ENCODE measurements at regions of chr11 and their contacts with region 1.

Region 1: DNA sequence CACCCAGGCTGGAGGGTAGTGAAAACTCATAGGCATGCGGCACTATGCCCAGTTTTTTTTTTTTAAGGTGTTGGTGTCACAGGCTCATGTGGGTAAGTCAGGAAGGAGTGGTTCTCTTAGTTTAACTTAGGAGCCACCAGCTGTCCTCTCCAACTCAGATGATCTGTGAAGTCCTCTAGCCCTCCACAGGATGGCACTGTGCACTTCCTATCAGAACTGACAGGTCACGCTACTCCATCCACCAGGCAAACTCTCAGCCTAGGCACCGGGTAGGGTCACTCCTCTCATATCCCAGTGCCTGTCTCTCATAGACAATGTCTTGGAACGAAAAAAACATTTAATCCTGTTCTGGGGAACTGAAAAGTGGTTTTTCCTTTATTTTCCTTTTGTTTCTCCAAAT is 16.5 kb downstream of the NAP1L4 start:
- DNase-seq: peak; percentile 82
- H3K4me3 Mint-ChIP-seq: no peak overlapping the region
- H3K27ac Mint-ChIP-seq: peak overlapping the region; percentile 74
- H3K4me1 Mint-ChIP-seq: peaks cover 24% of the 10 kb centered on the region
- H3K27me3 Mint-ChIP-seq: no peaks in the 10 kb centered on the region

Region 2: DNA sequence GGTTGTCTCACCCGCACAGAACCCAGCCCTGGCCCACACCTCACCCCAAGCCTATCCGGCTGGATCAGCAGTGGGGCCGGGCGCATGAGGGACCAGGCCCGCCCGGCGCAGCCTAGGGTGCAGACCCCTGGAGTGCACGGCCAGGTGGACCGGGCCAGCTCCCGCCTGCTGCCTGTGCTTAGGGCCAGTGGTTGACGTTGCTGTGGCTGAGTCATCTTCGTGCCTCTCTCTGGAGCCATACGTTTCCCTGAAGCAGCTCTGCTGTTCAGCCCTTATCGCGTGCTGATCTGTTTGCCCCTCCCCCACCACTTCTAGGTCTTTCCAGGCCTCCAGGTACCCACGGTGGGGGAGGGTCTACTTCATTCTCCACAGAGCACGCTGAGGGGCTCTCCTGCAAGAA is 129.5 kb before region 1 on chr11:
- intact Hi-C with region 1: no loop called
- DNase-seq: no peak
- H3K4me3 Mint-ChIP-seq: no peak overlapping the region
- H3K27ac Mint-ChIP-seq: no peak overlapping the region
- H3K4me1 Mint-ChIP-seq: no peaks in the 10 kb centered on the region
- H3K27me3 Mint-ChIP-seq: no peaks in the 10 kb centered on the region

Region 3: DNA sequence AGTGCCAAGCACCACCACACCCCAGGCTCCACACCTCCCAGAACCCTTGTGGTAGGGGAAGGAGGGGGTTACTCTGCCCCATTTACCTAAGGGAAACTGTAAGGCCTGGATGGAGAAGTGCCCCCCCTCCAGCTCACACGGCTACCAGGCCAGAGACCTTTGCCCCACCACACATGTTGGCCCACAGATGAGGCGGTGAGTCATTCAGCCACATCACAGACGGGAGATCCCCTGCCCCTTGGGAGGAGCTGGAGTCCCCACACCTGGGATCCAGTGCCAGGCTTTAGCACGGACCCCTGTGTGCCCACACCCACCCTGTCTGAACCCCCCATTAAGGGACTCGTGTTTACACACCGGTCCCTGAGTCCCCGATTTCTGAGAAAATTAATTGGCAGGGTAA is 115.0 kb before region 1 on chr11:
- intact Hi-C with region 1: no loop called
- DNase-seq: no peak
- H3K4me3 Mint-ChIP-seq: no peak overlapping the region
- H3K27ac Mint-ChIP-seq: no peak overlapping the region
- H3K4me1 Mint-ChIP-seq: no peaks in the 10 kb centered on the region
- H3K27me3 Mint-ChIP-seq: peaks cover 34% of the 10 kb centered on the region

Region 4: GRCh38 chr11:2881981-2882375 is 93.6 kb before region 1 on chr11:
- intact Hi-C with region 1: no loop called
- DNase-seq: no peak
- H3K4me3 Mint-ChIP-seq: no peak overlapping the region
- H3K27ac Mint-ChIP-seq: no peak overlapping the region
- H3K4me1 Mint-ChIP-seq: peaks cover 4% of the 10 kb centered on the region
- H3K27me3 Mint-ChIP-seq: peaks cover 34% of the 10 kb centered on the region

Region 5: DNA sequence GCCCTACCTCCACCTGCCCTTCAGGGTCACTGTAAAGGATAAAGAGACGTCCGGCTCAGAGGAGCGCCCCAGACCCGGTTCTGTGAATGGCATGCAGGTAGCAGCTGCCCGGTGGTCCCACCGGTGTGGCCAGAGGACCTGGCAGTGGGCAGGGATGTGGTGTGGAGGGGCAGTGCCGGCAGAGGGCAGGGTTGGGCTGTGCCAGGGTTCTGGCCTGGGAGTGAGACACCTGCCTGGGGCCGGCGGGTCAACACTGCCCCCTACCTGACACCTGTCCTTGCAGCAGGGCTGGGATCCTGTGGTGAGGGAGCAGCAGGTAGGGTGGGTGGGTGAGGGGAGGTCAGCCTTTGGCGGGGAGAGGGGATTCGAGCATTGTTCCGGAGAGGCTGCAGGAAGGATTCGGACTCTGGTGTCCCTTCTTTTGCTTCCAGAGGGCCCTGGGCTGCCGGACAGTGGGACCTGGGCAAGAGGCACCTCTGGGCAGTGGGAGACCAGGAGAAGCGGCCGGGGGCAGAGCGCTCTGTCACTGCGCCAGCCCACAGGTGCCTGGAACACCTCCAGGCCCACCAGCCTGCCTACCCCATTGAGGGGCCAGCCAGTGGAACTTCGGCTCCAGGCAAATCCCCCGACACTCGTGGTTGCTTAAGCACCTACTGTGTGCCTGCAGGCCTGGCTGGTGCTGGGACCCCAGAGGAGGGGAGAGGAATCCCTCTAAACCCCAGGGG is 44.7 kb before region 1 on chr11:
- intact Hi-C with region 1: loop called (anchors 5 kb)
- DNase-seq: peak; percentile 83
- H3K4me3 Mint-ChIP-seq: peak overlapping the region; percentile 92
- H3K27ac Mint-ChIP-seq: peak overlapping the region; percentile 89
- H3K4me1 Mint-ChIP-seq: peaks cover 29% of the 10 kb centered on the region
- H3K27me3 Mint-ChIP-seq: peaks cover 18% of the 10 kb centered on the region

Region 6: DNA sequence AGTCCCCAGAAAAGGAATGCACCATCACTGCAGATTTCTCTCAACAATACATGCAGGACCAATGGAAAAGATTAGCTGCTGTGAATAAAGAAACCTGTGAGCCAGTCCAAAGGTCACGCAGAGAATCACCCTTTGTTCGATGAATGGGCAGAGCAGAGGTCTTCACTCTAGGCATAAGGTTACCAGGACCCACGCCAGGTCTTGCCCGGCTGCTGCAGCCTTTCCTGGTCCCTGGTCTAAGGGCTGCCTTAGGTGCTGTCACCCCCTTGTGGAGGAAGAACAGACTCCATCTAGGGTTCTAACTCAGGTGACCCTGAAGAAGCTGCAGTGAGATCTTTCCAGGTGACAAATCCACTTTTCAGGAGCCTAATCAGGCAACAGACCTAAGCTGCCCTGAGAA is 45.5 kb after region 1 on chr11:
- intact Hi-C with region 1: loop called (anchors 1 kb)
- DNase-seq: peak; percentile 84
- H3K4me3 Mint-ChIP-seq: no peak overlapping the region
- H3K27ac Mint-ChIP-seq: no peak overlapping the region
- H3K4me1 Mint-ChIP-seq: peaks cover 34% of the 10 kb centered on the region
- H3K27me3 Mint-ChIP-seq: no peaks in the 10 kb centered on the region

Region 7: DNA sequence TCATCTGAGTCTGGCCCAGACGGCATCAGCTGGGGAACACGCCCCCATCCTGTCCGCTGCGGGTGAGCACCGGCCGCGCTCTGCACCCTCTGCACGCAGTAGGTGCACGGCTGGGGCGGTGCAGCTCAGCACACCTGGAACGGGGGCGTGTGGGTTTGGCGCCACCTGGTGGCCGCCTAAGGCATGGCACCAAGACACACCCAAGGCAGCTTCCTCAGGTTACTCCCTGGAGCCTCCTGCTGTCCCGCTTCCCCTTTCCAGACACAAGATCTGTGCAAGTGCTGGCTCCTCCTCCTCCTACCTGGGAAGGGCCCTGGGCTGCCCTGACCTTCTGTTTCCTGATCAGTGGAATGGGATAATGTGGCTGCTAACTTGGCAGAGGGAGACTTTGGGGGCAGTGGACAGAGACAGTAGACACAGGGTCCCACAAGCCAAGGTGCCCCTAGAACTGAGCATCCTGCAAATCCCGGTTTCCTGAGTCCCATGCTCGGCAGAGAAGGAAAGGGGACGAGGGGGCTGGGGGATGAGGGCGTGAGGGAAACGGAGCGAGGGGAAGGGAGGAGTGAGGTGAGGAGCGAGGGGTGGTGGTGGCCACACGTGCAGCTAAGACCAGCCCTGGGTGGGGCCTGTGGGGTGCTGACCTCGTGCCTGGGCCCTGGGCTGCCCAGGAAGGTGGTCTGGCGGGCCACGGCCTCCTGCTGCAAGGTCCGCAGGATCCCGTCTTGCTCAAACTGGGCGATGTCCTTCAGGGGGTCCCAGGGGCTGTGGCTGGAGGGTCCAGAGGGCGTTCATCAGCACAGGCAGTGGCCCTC is 116.4 kb after region 1 on chr11:
- intact Hi-C with region 1: loop called (anchors 2 kb)
- DNase-seq: peak; percentile 92
- H3K4me3 Mint-ChIP-seq: no peak overlapping the region
- H3K27ac Mint-ChIP-seq: no peak overlapping the region
- H3K4me1 Mint-ChIP-seq: peaks cover 4% of the 10 kb centered on the region
- H3K27me3 Mint-ChIP-seq: peaks cover 7% of the 10 kb centered on the region

Measured in activated CD4-positive, alpha-beta T cell treated with anti-CD3 and anti-CD28 coated beads, Interleukin-2, amount 10 ng/mL, durations not matched to agents 24 days and 14 days (primary cell).